SK-N-SH (cell line): ENCODE measurements at regions of chr1 and their contacts with region 1.

Region 1: DNA sequence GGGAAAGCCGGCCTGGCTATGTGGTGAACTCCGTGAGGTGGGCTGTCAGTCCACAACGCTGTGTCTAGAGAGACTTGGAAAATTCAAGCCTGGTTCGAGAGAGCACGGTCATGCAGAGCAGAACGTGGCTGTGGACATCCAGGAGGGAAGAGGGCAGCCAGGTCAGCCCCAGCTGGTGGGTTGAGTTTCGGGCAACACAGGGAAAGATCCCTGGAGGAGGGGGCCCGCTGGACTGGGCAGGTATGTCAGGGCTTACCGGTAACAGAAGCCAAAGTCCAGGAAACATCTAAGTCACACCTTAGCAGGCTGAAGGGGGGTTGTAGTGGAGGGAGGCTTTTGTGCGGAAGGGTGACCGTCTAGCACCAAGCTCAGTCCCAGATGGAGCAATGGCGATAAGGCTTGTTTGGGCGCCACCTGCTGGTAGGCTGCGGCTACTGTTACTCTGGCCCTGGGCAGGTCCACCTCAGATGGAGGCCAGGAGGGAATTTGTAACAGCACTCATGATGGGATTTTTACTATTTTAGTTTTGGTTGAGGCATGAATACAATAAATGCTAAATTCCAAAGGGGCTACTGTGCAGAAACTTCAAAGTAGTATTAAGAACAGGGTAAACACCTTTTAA is 143.3 kb upstream of the ZNF644 start:
- DNase-seq: peak; percentile 74
- H3K4me3 ChIP-seq: no peak overlapping the region; a peak in 1 of 4 replicates
- H3K27ac ChIP-seq: no peak overlapping the region
- H3K4me1 ChIP-seq: no peaks in the 10 kb centered on the region
- H3K27me3 ChIP-seq: no peaks in the 10 kb centered on the region
- CTCF ChIP-seq: peak; percentile 92
- EP300 ChIP-seq: no peak
- RAD21 ChIP-seq: peak; percentile 71

Region 2: DNA sequence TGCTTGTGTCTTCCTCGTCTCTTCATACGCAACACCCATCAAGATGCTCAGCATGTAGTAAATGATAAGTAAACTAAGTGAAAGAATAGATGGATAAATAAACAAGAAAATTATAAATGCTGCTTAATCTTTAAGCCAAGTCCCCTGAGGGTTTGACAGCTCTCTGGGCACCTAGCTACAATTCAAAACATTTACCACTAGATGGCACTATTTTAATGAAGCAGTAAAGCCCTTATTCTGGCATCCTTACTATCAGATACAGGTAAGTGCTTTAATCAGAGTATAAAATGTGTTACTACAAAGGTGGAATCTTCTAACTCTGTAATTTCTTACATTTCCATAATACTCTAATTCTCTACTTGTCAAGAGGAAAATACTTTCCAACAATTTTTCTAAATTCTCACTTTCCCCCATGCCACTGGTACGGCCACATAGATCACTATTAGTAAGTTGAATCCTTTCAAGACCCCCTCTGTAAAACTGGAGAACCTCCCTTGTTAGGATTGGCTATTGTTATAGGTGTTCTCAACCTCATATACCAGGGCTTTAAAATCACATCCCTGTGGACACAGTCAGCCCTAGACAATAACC is 585.8 kb before region 1 on chr1:
- CTCF ChIA-PET with region 1: interaction called, 19 read pairs
- POLR2A ChIA-PET with region 1: no interaction called
- DNase-seq: peak; percentile 45
- H3K4me3 ChIP-seq: no peak overlapping the region
- H3K27ac ChIP-seq: no peak overlapping the region
- H3K4me1 ChIP-seq: no peaks in the 10 kb centered on the region
- H3K27me3 ChIP-seq: no peaks in the 10 kb centered on the region; the same call in 1 of the 2 replicates
- CTCF ChIP-seq: peak; percentile 78
- EP300 ChIP-seq: no peak
- RAD21 ChIP-seq: peak; percentile 63

Region 3: DNA sequence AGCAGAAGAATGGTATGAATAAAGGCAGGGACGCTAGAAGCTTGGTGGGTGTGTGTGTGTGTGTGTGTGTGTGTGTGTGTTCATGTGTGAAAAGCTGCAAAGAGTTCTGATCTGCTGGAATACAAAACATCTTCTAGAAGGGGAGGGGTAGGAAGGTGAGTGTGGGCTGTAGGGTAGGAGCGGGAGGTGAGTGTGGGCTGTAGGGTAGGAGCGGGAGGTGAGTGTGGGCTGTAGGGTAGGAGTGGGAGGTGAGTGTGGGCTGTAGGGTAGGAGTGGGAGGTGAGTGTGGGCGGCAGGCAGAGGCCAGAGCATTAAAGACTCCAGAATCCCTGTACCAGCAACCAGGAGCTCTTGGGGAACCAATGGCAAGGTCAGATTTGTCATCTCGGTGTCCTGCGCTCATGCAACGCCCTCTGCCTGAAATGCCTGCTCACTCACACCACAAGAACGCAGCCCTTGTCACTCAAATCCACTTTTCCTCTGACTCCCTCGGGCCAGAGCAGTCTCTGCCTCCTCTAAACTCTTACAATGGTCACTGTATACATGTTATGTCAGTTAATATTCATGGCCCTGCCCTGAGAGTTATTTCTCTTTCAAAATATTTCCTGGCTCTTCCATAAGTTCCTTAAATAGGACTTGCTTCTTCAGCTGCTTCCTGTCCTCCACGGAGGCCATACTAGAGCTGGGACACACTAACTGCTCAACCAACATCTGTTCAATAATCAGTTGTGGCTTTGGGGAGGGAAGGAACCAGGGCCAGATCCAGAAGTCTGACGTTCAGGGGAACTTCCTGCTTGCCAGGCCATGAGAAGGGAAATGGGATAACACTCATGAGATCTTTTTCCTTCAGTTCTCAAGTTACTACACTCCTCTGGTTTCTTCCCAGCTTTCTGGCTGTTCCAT is 89.7 kb before region 1 on chr1:
- CTCF ChIA-PET with region 1: interaction called, 13 read pairs
- POLR2A ChIA-PET with region 1: no interaction called
- DNase-seq: no peak
- H3K4me3 ChIP-seq: no peak overlapping the region
- H3K27ac ChIP-seq: no peak overlapping the region
- H3K4me1 ChIP-seq: no peaks in the 10 kb centered on the region
- H3K27me3 ChIP-seq: no peaks in the 10 kb centered on the region
- CTCF ChIP-seq: no peak
- EP300 ChIP-seq: no peak
- RAD21 ChIP-seq: no peak

Region 4: GRCh38 chr1:91141858-91142257 is 23.3 kb before region 1 on chr1:
- CTCF ChIA-PET with region 1: interaction called, 20 read pairs
- POLR2A ChIA-PET with region 1: no interaction called
- DNase-seq: no peak
- H3K4me3 ChIP-seq: no peak overlapping the region
- H3K27ac ChIP-seq: no peak overlapping the region
- H3K4me1 ChIP-seq: no peaks in the 10 kb centered on the region
- H3K27me3 ChIP-seq: no peaks in the 10 kb centered on the region; the same call in 1 of the 2 replicates
- CTCF ChIP-seq: no peak
- EP300 ChIP-seq: no peak
- RAD21 ChIP-seq: no peak

Region 5: DNA sequence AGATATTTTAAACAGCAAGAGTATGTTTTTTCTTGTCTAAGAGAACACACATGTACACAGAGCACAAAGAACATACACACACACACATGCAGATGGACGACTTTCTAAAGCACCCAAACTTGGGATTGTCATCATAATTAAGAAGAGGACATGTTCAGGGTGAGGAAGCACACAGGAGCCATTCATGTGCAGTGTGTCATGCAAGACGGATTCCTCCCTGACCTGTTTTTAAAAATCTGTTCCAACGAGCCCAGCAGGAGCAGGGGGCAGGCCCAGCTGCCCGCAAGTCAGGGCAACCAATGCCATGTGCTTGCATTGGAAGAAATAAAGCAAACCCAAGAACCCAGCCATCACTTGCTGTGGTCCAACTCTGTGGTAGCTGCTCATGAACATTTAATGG is 24.0 kb after region 1 on chr1:
- CTCF ChIA-PET with region 1: interaction called, 12 read pairs
- POLR2A ChIA-PET with region 1: no interaction called
- DNase-seq: no peak
- H3K4me3 ChIP-seq: no peak overlapping the region
- H3K27ac ChIP-seq: no peak overlapping the region
- H3K4me1 ChIP-seq: no peaks in the 10 kb centered on the region
- H3K27me3 ChIP-seq: no peaks in the 10 kb centered on the region; the same call in 1 of the 2 replicates
- CTCF ChIP-seq: no peak
- EP300 ChIP-seq: no peak
- RAD21 ChIP-seq: no peak

Region 6: GRCh38 chr1:91261655-91262054 is 96.5 kb after region 1 on chr1:
- CTCF ChIA-PET with region 1: interaction called, 11 read pairs
- POLR2A ChIA-PET with region 1: no interaction called
- DNase-seq: no peak
- H3K4me3 ChIP-seq: no peak overlapping the region
- H3K27ac ChIP-seq: no peak overlapping the region
- H3K4me1 ChIP-seq: no peaks in the 10 kb centered on the region
- H3K27me3 ChIP-seq: no peaks in the 10 kb centered on the region
- CTCF ChIP-seq: no peak
- EP300 ChIP-seq: no peak
- RAD21 ChIP-seq: no peak

Region 7: DNA sequence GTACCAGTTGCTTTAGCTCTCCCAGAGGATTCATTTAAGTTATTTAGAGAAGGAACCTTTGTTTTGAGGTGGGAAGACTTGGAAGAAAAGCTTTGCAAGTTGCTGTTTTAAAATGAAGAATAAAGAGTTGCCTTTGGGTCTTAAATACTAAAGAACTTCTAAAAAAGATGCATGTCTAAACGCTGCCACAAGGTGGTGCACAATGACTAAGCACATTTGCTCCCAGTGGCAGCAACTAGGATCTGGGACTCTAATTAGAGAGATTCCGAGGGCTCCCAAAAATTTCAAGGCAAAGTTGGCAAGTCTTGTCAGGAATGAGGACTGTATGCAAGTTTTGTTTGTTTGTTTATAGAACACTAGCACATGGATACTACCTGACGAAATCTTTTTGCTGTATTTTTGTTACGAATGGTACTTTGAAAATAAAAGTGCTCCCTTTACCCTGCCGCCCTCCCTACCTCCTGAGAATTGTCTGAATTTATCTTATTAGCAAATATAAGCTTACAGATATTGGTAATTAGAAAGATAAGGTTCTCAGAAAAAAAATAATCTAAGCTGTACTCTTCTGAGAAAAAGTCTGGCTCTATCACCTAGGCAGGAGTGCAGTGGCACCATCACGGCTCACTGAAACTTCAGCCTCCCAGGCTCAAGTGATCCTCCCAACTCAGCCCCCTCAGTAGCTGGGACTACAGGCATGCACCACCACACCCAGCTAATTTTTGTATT is 117.7 kb after region 1 on chr1:
- CTCF ChIA-PET with region 1: interaction called, 49 read pairs
- POLR2A ChIA-PET with region 1: no interaction called
- DNase-seq: peak; percentile 69
- H3K4me3 ChIP-seq: peak overlapping the region in 1 of 2 experiments; percentile 26; a peak in 1 of 4 replicates
- H3K27ac ChIP-seq: no peak overlapping the region
- H3K4me1 ChIP-seq: no peaks in the 10 kb centered on the region
- H3K27me3 ChIP-seq: no peaks in the 10 kb centered on the region
- CTCF ChIP-seq: peak; percentile 81
- EP300 ChIP-seq: no peak
- RAD21 ChIP-seq: peak; percentile 86